B cell (primary cell): ENCODE measurements at regions of chr21 and their contacts with region 1.

Region 1: GRCh38 chr21:35616090-35616489 is 444.2 kb downstream of the SETD4 start:
- DNase-seq: peak; percentile 28
- ATAC-seq: no peak
- H3K4me3 ChIP-seq: no peak overlapping the region
- H3K4me3 Mint-ChIP-seq: no peak overlapping the region
- H3K27ac ChIP-seq: no peak overlapping the region
- H3K27ac Mint-ChIP-seq: no peak overlapping the region
- H3K4me1 ChIP-seq: no peaks in the 10 kb centered on the region
- H3K4me1 Mint-ChIP-seq: peaks cover 2% of the 10 kb centered on the region
- H3K27me3 ChIP-seq: peaks cover 0 to 4% (median 2%) of the 10 kb centered on the region in 4 experiments
- H3K27me3 Mint-ChIP-seq: peaks cover 15% of the 10 kb centered on the region
- CTCF ChIP-seq: peak; percentile 46

Region 2: DNA sequence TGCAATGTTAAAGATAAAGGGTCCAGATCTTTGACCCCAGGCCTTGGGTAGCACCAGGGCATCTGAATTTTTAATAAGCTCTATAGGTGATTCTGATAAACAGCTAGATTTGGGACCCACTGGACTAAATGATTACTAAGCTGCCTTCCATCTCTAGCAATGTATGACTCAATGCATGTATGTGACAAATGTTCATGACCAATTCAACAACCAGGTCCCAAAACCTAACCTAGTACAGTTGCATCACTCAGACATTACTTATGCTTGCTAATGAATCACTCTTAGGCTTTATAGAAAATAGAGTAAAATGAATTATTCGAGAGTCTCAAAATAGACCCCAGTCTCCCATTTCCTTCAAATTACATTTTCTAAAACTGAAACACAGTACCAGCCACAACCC is 1036.7 kb before region 1 on chr21:
- CTCF ChIA-PET with region 1: no interaction called
- POLR2A ChIA-PET with region 1: no interaction called
- intact Hi-C with region 1: no loop called
- DNase-seq: no peak
- ATAC-seq: no peak
- H3K4me3 ChIP-seq: no peak overlapping the region
- H3K4me3 Mint-ChIP-seq: no peak overlapping the region
- H3K27ac ChIP-seq: no peak overlapping the region
- H3K27ac Mint-ChIP-seq: no peak overlapping the region
- H3K4me1 ChIP-seq: no peaks in the 10 kb centered on the region
- H3K4me1 Mint-ChIP-seq: no peaks in the 10 kb centered on the region
- H3K27me3 ChIP-seq: no peaks in the 10 kb centered on the region
- H3K27me3 Mint-ChIP-seq: peaks cover 3% of the 10 kb centered on the region
- CTCF ChIP-seq: no peak

Region 3: GRCh38 chr21:34745557-34746255 is 870.4 kb before region 1 on chr21:
- CTCF ChIA-PET with region 1: interaction called, 12 read pairs
- POLR2A ChIA-PET with region 1: no interaction called
- intact Hi-C with region 1: loop called (anchors 1 kb)
- DNase-seq: peak; percentile 76
- ATAC-seq: peak; percentile 89
- H3K4me3 ChIP-seq: peak overlapping the region in 3 of 5 experiments; percentile 14 to 41 (median 27)
- H3K4me3 Mint-ChIP-seq: peak overlapping the region; percentile 81
- H3K27ac ChIP-seq: no peak overlapping the region
- H3K27ac Mint-ChIP-seq: no peak overlapping the region
- H3K4me1 ChIP-seq: peaks cover 0 to 8% of the 10 kb centered on the region in 2 donors
- H3K4me1 Mint-ChIP-seq: peaks cover 4% of the 10 kb centered on the region
- H3K27me3 ChIP-seq: no peaks in the 10 kb centered on the region
- H3K27me3 Mint-ChIP-seq: peaks cover 25% of the 10 kb centered on the region
- CTCF ChIP-seq: peak; percentile 85